ENCODE measurements at regions of chr10 and their contacts with region 1.

Region 1: DNA sequence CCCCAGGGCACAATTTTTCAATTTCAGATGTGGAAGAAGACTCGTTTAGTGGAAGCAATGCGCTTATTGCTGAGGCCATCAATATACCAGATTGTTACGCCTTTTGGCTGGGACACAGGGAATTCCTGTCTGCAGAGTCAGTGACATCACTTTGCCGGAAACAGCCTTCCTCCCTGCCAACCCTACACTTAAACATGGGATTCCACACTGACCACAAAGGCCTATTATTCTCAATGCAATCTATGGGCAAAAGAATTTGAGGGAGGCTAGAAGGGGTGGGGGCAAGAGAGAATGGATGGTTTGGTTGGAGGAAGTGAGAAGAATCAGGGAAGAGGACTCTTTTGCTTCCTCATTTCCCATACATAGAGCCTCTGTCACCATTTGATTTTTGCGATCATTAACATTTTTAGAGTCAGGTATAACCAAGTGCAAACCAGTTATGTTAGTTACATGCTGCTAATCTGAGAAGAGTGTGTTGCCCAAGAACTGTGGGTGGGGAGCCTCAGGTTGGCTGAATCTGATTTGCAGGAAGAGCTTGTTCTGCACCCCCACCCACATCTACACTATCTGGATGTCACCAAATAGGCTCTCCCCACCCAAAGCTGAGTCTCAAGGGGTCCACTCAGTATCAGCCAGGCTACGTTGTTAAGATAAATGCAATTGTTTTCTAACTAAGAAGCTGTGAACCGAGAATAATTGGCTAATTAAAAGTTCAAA is 58.2 kb downstream of the ENTPD1 start:
- DNase-seq: no peak
- ATAC-seq: no peak
- H3K4me3 Mint-ChIP-seq: peak overlapping the region; percentile 37
- H3K27ac Mint-ChIP-seq: peak overlapping the region; percentile 67
- H3K4me1 Mint-ChIP-seq: peaks cover 79% of the 10 kb centered on the region
- H3K27me3 Mint-ChIP-seq: no peaks in the 10 kb centered on the region
- CTCF ChIP-seq: no peak

Region 2: DNA sequence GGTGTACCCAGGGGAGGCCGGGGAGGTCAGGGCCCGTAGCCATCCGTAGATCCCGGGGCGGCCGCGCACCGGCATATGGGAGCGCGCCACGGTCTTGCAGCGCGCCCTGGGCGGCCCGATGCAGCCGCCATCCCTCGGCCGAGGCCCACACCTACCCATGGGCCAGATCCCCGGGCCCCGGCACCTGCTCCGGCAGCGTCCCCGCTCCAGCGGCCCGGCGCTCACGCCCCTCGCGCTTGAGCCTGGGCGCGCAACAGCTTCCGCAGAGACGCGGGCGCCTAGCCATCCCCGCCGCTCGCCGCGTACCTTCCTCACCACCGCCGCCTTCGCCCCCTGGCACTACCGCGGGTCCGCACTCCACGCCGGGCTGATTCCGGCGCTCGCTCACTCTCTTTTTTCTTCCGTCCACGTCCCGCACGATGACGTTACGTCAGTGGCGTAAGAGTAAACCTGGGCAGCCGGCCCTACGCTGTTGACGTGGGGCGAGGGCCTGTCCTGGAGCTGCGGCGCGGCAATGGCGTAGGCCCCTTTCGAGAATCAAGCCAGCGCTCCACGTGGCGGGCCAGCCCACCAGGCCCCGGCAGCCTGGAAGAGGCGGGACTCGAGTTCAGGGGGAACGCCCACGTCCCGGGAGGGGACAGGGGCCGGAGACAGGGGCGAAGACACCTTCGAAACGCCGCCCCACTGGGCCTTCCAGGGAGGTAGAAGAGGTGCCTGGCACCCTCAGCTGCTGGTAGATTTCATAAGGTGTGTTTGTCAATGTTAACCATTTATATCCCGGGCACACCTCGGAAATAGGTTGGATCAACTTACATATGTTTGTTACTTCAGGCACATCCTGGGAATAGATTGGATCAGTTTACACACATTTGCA is 157.6 kb before region 1 on chr10 and contains the start of gene ALDH18A1:
- CTCF ChIA-PET with region 1: no interaction called
- POLR2A ChIA-PET with region 1: no interaction called
- intact Hi-C with region 1: no loop called
- DNase-seq: peak; percentile 94
- ATAC-seq: peak; percentile 96
- H3K4me3 Mint-ChIP-seq: peak within 1 kb of the TSS; percentile 98
- H3K27ac Mint-ChIP-seq: peak within 1 kb of the TSS; percentile 86
- H3K4me1 Mint-ChIP-seq: peaks cover 31% of the 10 kb centered on the region
- H3K27me3 Mint-ChIP-seq: no peaks in the 10 kb centered on the region
- CTCF ChIP-seq: no peak
- total RNA-seq, gene ALDH18A1: 45.9 and 53.0 TPM in 2 replicates

Region 3: GRCh38 chr10:95716466-95717224 is 97.5 kb before region 1 on chr10:
- CTCF ChIA-PET with region 1: no interaction called
- POLR2A ChIA-PET with region 1: no interaction called
- intact Hi-C with region 1: no loop called
- DNase-seq: no peak
- ATAC-seq: no peak
- H3K4me3 Mint-ChIP-seq: no peak overlapping the region
- H3K27ac Mint-ChIP-seq: no peak overlapping the region
- H3K4me1 Mint-ChIP-seq: peaks cover 5% of the 10 kb centered on the region
- H3K27me3 Mint-ChIP-seq: no peaks in the 10 kb centered on the region
- CTCF ChIP-seq: no peak

Region 4: DNA sequence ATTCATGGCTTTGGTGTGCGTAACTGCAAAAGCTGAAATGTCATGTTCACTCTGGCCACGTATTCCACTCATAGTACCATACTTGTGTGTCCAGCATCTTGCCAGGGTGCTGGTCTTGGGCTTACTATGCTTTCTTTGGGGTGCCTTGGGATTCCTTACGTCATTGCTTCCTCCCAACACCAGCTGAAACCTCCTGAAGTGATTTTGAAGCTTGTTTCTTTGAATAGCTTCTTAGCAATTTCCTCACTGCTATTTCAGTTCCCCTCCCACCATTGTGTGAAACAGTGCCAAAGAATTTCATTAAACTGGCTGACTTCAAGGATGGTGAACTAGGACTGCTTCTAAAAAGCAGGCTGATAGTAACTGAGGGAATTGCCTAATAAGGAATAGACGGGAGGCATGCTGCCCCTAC is 21.3 kb before region 1 on chr10:
- CTCF ChIA-PET with region 1: interaction called, 3 read pairs
- POLR2A ChIA-PET with region 1: interaction called, 7 read pairs
- intact Hi-C with region 1: loop called (anchors 1 kb)
- DNase-seq: no peak
- ATAC-seq: peak; percentile 15
- H3K4me3 Mint-ChIP-seq: peak overlapping the region; percentile 32
- H3K27ac Mint-ChIP-seq: peak overlapping the region; percentile 94
- H3K4me1 Mint-ChIP-seq: peaks cover 94% of the 10 kb centered on the region
- H3K27me3 Mint-ChIP-seq: no peaks in the 10 kb centered on the region
- CTCF ChIP-seq: no peak

Measured in activated B cell treated with CpG ODN at 0.5 μM for 24 hours (primary cell).